Activated naive CD4-positive, alpha-beta T cell treated with anti-CD3 and anti-CD28 coated beads for 36 hours (primary cell): ENCODE measurements at regions of chr2 and their contacts with region 1.

Region 1: DNA sequence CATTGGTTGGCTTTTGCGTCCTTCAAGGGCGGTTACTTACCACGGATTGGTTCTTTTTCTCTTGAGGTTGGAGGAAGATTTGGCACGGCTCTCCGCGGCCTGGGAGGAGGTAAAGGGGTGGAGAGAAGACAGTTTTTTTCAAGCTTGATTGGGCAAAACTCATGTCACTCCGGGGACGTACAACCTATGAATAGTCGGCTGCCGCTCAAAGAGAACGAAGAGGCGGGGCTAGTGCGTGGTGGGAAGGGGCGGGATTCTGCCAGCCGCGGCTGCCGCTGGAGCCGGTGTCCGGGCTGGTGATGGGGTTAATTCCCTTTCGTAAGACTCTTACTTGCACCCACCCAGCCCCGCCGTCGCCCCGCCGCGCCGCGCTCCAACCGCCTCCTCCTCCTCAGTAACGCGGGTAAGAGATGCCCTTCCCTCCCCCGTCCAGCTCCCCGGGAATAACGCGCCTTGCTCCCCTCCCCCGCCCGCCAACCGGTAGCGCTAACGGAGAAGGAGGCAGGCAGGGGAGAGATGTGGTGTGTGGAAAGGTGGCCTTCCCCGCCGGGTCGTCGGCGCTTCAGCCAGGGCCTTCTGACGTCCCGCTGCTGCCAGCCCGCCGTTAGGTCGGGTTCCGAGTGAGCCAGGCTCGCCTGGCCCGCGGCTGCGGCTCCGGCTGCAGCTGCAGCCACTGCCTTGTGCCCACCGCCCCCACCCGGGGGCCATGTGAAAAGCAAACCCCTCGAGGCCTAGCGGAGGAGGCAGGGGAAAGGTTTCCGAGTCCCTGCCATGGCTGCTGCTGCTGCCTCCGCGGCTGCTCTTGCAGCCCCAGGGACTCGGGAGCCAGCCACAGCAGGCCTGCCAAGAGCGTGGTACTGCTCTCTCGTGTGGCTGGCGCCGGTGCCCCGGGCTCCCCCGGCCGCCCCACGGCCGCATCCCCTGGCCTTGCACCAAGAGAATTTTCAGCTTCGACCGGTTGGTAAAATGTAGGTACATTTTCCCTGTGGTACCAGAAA is at the start of gene R3HDM1:
- DNase-seq: peak; percentile 98
- H3K4me3 Mint-ChIP-seq: no peak within 1 kb of the TSS
- H3K27ac Mint-ChIP-seq: peak within 1 kb of the TSS; percentile 39
- H3K4me1 Mint-ChIP-seq: peaks cover 39% of the 10 kb centered on the region
- H3K27me3 Mint-ChIP-seq: no peaks in the 10 kb centered on the region
- total RNA-seq, gene R3HDM1: 61.9 to 73.1 TPM

Region 2: DNA sequence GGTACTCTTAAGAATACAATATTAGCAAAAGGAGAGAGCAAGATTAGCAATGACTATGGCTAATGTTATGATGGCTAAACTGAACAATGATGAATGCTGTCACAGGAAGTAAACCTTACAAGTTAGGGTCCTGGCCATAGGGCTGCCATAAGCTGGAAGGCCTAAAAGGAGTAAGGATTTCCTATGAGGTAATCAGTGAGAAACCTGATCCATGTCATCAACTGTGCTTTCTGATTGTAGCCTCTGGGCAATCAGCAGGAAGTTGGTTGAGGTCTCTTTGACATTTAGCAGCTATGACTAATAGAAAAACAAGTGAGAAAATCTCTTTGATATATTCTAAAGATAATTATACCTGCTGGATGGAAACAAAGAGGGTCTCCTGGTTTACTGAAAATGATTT is 286.5 kb before region 1 on chr2:
- CTCF ChIA-PET with region 1: no interaction called
- intact Hi-C with region 1: loop called (anchors 1 kb)
- DNase-seq: peak; percentile 45
- H3K4me3 Mint-ChIP-seq: no peak overlapping the region
- H3K27ac Mint-ChIP-seq: peak overlapping the region; percentile 84
- H3K4me1 Mint-ChIP-seq: peaks cover 12% of the 10 kb centered on the region
- H3K27me3 Mint-ChIP-seq: no peaks in the 10 kb centered on the region

Region 3: GRCh38 chr2:135635212-135635835 is 103.8 kb after region 1 on chr2:
- CTCF ChIA-PET with region 1: no interaction called
- intact Hi-C with region 1: no loop called
- DNase-seq: no peak
- H3K4me3 Mint-ChIP-seq: no peak overlapping the region
- H3K27ac Mint-ChIP-seq: no peak overlapping the region
- H3K4me1 Mint-ChIP-seq: peaks cover 10% of the 10 kb centered on the region
- H3K27me3 Mint-ChIP-seq: no peaks in the 10 kb centered on the region

Region 4: DNA sequence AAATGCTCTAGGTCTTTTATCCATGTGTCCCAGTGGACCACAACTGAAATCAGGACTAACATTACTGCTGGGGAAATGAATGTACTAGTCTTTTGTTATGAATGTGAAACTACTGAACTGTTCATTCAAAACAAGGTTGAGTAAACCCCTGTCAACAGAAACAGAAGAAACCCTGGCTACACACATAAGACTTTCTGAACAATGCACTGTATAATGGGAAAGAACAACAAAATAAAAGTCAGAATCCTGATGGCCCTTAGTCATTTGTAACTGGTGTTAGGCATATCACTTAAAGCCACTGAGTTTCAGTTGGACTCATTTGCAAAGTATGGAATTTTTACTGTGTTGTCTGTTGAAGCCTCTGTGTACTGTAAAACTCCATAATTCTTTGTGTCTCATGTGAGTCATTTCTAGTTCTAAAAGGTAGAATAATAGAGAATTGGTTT is 133.1 kb after region 1 on chr2:
- CTCF ChIA-PET with region 1: no interaction called
- intact Hi-C with region 1: loop called (anchors 2 kb)
- DNase-seq: no peak
- H3K4me3 Mint-ChIP-seq: no peak overlapping the region
- H3K27ac Mint-ChIP-seq: peak overlapping the region; percentile 24
- H3K4me1 Mint-ChIP-seq: peaks cover 27% of the 10 kb centered on the region
- H3K27me3 Mint-ChIP-seq: no peaks in the 10 kb centered on the region

Region 5: GRCh38 chr2:135741395-135742324 is 210.1 kb after region 1 on chr2 and contains the start of gene UBXN4:
- CTCF ChIA-PET with region 1: no interaction called
- intact Hi-C with region 1: loop called (anchors 1 kb)
- DNase-seq: peak; percentile 98
- H3K4me3 Mint-ChIP-seq: peak within 1 kb of the TSS; percentile 98
- H3K27ac Mint-ChIP-seq: peak within 1 kb of the TSS; percentile 99
- H3K4me1 Mint-ChIP-seq: peaks cover 30% of the 10 kb centered on the region
- H3K27me3 Mint-ChIP-seq: no peaks in the 10 kb centered on the region
- total RNA-seq, gene UBXN4: 100 to 105 TPM

Region 6: GRCh38 chr2:136059036-136059472 is 527.5 kb after region 1 on chr2:
- CTCF ChIA-PET with region 1: no interaction called
- intact Hi-C with region 1: loop called (anchors 5 kb)
- DNase-seq: no peak
- H3K4me3 Mint-ChIP-seq: no peak overlapping the region
- H3K27ac Mint-ChIP-seq: no peak overlapping the region
- H3K4me1 Mint-ChIP-seq: peaks cover 59% of the 10 kb centered on the region
- H3K27me3 Mint-ChIP-seq: no peaks in the 10 kb centered on the region